ENCODE measurements at regions of chr1 and their contacts with region 1.

Region 1: GRCh38 chr1:54212872-54213271 is 12.9 kb downstream of the MRPL37 start:
- DNase-seq: no peak
- ATAC-seq: no peak
- H3K4me3 ChIP-seq: no peak overlapping the region
- H3K27ac ChIP-seq: no peak overlapping the region
- H3K4me1 ChIP-seq: no peaks in the 10 kb centered on the region
- H3K27me3 ChIP-seq: no peaks in the 10 kb centered on the region
- CTCF ChIP-seq: no peak
- POLR2A ChIP-seq: no peak
- RAD21 ChIP-seq: no peak

Region 2: DNA sequence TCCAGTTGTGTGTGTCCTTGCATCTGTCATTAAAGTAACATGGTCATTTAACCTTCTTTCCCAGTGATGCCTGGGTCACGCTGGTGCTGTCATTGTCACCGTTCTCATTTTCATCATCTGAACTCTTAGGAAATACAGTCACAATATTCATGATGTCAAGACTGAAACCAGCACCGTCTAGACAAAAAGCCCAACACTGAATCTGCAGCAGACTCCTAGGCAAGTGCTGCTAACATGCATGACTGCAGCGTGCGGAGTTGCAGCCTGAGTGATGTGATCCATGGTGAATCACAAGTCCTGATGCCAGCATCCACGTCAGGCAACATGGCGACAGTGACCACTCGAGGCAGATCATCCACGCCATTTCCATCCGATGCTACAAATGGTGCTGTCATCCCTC is 24.7 kb after region 1 on chr1:
- CTCF ChIA-PET with region 1: no interaction called
- POLR2A ChIA-PET with region 1: no interaction called
- dilution Hi-C with region 1: no loop called
- in situ Hi-C with region 1: no loop called
- intact Hi-C with region 1: loop called (anchors 2 kb)
- DNase-seq: no peak
- ATAC-seq: no peak
- H3K4me3 ChIP-seq: no peak overlapping the region
- H3K27ac ChIP-seq: no peak overlapping the region
- H3K4me1 ChIP-seq: no peaks in the 10 kb centered on the region
- H3K27me3 ChIP-seq: no peaks in the 10 kb centered on the region
- CTCF ChIP-seq: no peak
- POLR2A ChIP-seq: no peak
- RAD21 ChIP-seq: no peak